Posterior vena cava (tissue), 2 donors: ENCODE measurements at regions of chr15 and their contacts with region 1.

Region 1: DNA sequence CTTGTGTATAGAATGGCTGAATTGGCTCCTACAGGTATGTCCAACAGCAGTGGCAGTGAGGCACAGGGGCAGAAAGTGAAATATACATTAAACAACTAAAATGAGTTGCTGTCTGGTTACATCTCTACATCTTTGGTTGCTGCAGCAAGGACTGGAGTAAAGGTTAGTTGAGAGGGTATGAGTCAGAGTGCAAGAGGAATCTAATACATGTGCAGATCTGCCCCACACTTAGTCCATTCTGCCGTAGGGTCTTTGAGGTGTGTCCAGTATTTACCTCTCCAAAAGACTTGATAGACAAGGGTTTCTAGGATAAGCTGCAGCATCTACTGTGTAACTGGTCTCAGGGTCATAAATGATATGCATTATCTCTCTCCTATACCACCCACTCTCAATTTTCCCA is 6.2 kb upstream of the NEDD4 start:
- DNase-seq: no peak

Region 2: GRCh38 chr15:55907797-55908196 is 91.8 kb before region 1 on chr15:
- intact Hi-C with region 1: no loop called
- DNase-seq: no peak

Region 3: DNA sequence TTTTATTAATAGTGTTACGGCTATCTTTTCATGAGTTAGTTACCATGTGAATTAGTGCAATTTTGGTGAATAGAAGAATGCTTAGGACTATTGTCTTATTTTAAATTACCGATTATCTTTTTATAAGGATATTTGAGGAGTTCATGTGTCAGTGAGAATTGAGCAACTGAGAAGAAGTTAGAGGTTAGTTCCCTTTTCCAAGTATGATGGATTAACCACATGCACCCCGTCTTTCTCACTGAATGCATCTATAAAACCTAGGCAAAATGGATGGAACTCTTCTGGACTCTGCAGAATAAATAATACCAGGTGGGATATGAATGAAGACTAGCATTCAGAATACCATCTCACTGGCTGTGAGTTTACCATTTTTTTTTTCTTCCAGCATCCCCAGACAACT is 993.1 kb after region 1 on chr15:
- intact Hi-C with region 1: loop called in 1 of 2 experiments (anchors 5 kb)
- DNase-seq: no peak